H1 (cell line): ENCODE measurements at regions of chr7 and their contacts with region 1.

Region 1: GRCh38 chr7:140446464-140446863 is 32.8 kb downstream of the MKRN1 start:
- DNase-seq: no peak
- H3K4me3 ChIP-seq: no peak overlapping the region
- H3K27ac ChIP-seq: no peak overlapping the region
- H3K4me1 ChIP-seq: peaks cover 5 to 21% (median 15%) of the 10 kb centered on the region in 4 experiments; a peak in 6 of 7 replicates
- H3K27me3 ChIP-seq: peaks cover 0 to 1% (median 0%) of the 10 kb centered on the region in 4 experiments; a peak in 1 of 7 replicates
- CTCF ChIP-seq: no peak
- EP300 ChIP-seq: no peak
- POLR2A ChIP-seq: no peak
- RAD21 ChIP-seq: peak in 1 of 2 experiments; percentile 24; a peak in 1 of 4 replicates

Region 2: GRCh38 chr7:140200061-140200989 is 246.1 kb before region 1 on chr7:
- CTCF ChIA-PET with region 1: no interaction called
- POLR2A ChIA-PET with region 1: no interaction called
- DNase-seq: no peak
- H3K4me3 ChIP-seq: no peak overlapping the region
- H3K27ac ChIP-seq: no peak overlapping the region
- H3K4me1 ChIP-seq: peaks cover 0 to 4% (median 1%) of the 10 kb centered on the region in 4 experiments; a peak in 2 of 7 replicates
- H3K27me3 ChIP-seq: no peaks in the 10 kb centered on the region
- CTCF ChIP-seq: no peak
- EP300 ChIP-seq: no peak
- POLR2A ChIP-seq: no peak
- RAD21 ChIP-seq: no peak

Region 3: DNA sequence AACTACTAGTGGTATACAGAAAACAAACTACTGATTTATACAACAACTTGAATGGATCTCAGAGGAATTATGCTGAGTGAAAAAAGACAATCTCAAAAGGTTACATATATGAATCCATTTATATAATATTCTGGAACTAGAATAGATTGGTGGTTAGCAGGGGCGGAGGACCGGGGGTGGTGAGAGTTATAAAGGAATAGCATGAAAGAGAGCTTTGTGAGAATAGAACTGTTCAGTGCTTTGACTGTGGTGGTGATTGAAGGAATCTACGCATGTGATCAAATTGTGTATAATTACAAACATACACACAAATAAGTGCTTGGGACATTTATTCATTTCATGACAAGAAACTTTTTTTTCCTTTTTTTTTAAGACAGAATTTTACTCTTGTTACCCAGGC is 23.0 kb before region 1 on chr7:
- CTCF ChIA-PET with region 1: interaction called, 18 read pairs
- POLR2A ChIA-PET with region 1: no interaction called
- DNase-seq: no peak
- H3K4me3 ChIP-seq: no peak overlapping the region
- H3K27ac ChIP-seq: no peak overlapping the region
- H3K4me1 ChIP-seq: no peaks in the 10 kb centered on the region
- H3K27me3 ChIP-seq: no peaks in the 10 kb centered on the region
- CTCF ChIP-seq: no peak
- EP300 ChIP-seq: no peak
- POLR2A ChIP-seq: no peak
- RAD21 ChIP-seq: no peak

Region 4: GRCh38 chr7:140435252-140435895 is 11.1 kb before region 1 on chr7:
- CTCF ChIA-PET with region 1: interaction called, 11 read pairs
- POLR2A ChIA-PET with region 1: interaction called, 3 read pairs
- DNase-seq: peak in 1 of 2 experiments; percentile 60
- H3K4me3 ChIP-seq: no peak overlapping the region
- H3K27ac ChIP-seq: no peak overlapping the region
- H3K4me1 ChIP-seq: no peaks in the 10 kb centered on the region
- H3K27me3 ChIP-seq: no peaks in the 10 kb centered on the region
- CTCF ChIP-seq: no peak
- EP300 ChIP-seq: no peak
- POLR2A ChIP-seq: no peak
- RAD21 ChIP-seq: no peak

Region 5: DNA sequence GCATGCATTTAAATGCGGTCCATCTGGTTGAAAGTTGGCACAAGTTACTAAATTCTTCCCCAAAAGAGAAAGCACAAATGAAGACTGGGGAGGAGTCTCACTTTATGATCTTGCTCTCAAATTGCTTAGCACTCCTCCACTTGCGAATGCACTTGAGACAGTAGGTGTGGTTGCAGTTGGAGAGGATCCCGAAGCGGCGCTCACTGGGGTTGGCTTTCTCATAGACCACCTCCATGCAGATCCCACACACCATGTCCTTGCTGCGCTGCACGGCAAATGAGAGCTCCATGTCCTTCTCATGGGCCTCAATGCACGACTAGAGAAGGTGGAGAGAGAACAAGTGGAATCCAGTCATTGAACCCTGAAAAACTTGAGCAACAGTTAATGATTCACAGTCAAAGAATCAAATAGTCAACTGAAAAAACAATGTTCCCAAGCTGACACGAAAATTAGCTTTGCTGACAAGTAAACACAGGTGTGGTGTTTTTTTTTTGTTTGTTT is 10.1 kb after region 1 on chr7:
- CTCF ChIA-PET with region 1: interaction called, 27 read pairs
- POLR2A ChIA-PET with region 1: interaction called, 5 read pairs
- DNase-seq: no peak
- H3K4me3 ChIP-seq: peak overlapping the region in 1 of 4 experiments; percentile 5; a peak in 1 of 8 replicates
- H3K27ac ChIP-seq: peak overlapping the region; percentile 32; the same call in 1 of the 2 replicates
- H3K4me1 ChIP-seq: peaks cover 7 to 25% (median 19%) of the 10 kb centered on the region in 4 experiments; a peak in 6 of 7 replicates
- H3K27me3 ChIP-seq: no peaks in the 10 kb centered on the region
- CTCF ChIP-seq: no peak
- EP300 ChIP-seq: no peak
- POLR2A ChIP-seq: no peak
- RAD21 ChIP-seq: no peak

Region 6: GRCh38 chr7:140485500-140486265 is 39.2 kb after region 1 on chr7:
- CTCF ChIA-PET with region 1: interaction called, 20 read pairs
- POLR2A ChIA-PET with region 1: no interaction called
- DNase-seq: no peak
- H3K4me3 ChIP-seq: peak overlapping the region in 1 of 4 experiments; percentile 28; a peak in 1 of 8 replicates
- H3K27ac ChIP-seq: peak overlapping the region; percentile 11; the same call in 1 of the 2 replicates
- H3K4me1 ChIP-seq: peaks cover 2 to 16% (median 12%) of the 10 kb centered on the region in 4 experiments; a peak in 5 of 7 replicates
- H3K27me3 ChIP-seq: no peaks in the 10 kb centered on the region
- CTCF ChIP-seq: no peak
- EP300 ChIP-seq: no peak
- POLR2A ChIP-seq: no peak
- RAD21 ChIP-seq: no peak

Region 7: GRCh38 chr7:140525743-140526142 is 79.3 kb after region 1 on chr7:
- CTCF ChIA-PET with region 1: no interaction called
- POLR2A ChIA-PET with region 1: no interaction called
- DNase-seq: no peak
- H3K4me3 ChIP-seq: no peak overlapping the region
- H3K27ac ChIP-seq: no peak overlapping the region
- H3K4me1 ChIP-seq: peaks cover 0 to 3% (median 0%) of the 10 kb centered on the region in 4 experiments; a peak in 2 of 7 replicates
- H3K27me3 ChIP-seq: no peaks in the 10 kb centered on the region
- CTCF ChIP-seq: no peak
- EP300 ChIP-seq: no peak
- POLR2A ChIP-seq: no peak
- RAD21 ChIP-seq: no peak

Region 8: GRCh38 chr7:140564643-140565042 is 118.2 kb after region 1 on chr7:
- CTCF ChIA-PET with region 1: no interaction called
- POLR2A ChIA-PET with region 1: no interaction called
- DNase-seq: no peak
- H3K4me3 ChIP-seq: no peak overlapping the region
- H3K27ac ChIP-seq: no peak overlapping the region
- H3K4me1 ChIP-seq: peaks cover 0 to 10% (median 4%) of the 10 kb centered on the region in 4 experiments; a peak in 5 of 7 replicates
- H3K27me3 ChIP-seq: no peaks in the 10 kb centered on the region
- CTCF ChIP-seq: no peak
- EP300 ChIP-seq: no peak
- POLR2A ChIP-seq: no peak
- RAD21 ChIP-seq: no peak

Region 9: GRCh38 chr7:140754506-140754905 is 308.0 kb after region 1 on chr7:
- CTCF ChIA-PET with region 1: no interaction called
- POLR2A ChIA-PET with region 1: no interaction called
- DNase-seq: no peak
- H3K4me3 ChIP-seq: no peak overlapping the region
- H3K27ac ChIP-seq: no peak overlapping the region
- H3K4me1 ChIP-seq: no peaks in the 10 kb centered on the region; a peak in 1 of 7 replicates
- H3K27me3 ChIP-seq: no peaks in the 10 kb centered on the region
- CTCF ChIP-seq: no peak
- EP300 ChIP-seq: no peak
- POLR2A ChIP-seq: no peak
- RAD21 ChIP-seq: no peak